Left colon (tissue), 2 donors: ENCODE measurements at regions of chr3 and their contacts with region 1.

Region 1: GRCh38 chr3:25843332-25843731 is 53.4 kb downstream of the OXSM start:
- DNase-seq: no peak
- ATAC-seq: no peak

Region 2: DNA sequence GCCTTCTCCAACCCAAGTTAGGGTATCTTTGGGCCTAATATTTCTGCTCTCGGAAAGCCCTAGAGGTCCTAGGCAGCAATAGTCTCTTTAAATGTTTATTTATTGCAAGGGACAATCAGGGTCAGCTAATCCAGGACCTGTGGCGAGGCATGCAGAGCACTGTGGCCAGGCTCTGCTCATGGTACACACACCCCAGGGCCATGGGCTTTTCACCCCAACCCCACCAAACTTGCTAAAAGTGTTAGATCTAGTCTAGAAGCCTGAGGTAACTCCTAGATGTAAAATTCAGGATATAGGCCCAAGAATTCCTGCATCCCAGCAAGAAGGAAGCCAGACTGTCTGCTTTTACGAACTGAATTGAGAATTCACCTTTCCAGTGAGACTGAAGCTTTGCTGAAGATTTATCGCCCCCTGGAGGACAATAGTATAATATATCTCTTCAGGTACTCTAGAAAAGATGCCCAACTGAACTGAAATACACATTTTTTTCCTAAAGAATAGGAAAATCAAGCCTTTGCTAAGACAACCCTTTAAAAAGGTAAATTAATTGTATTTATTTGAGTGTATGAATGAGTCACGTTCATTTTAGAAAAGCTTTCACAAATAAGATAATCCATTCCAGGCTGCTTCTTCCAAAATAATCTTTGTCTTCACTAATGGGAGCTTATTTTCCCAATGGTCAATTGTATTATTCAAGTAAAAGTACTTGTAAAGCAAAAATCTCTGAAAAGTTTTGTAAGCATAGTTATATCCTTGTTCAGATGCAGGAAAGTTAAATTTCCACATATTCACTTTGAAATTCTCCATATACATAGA is 869.1 kb after region 1 on chr3:
- intact Hi-C with region 1: loop called in 1 of 2 experiments (anchors 2 kb)
- DNase-seq: no peak
- ATAC-seq: no peak